Esophagus muscularis mucosa (tissue), 4 donors: ENCODE measurements at regions of chr12 and their contacts with region 1.

Region 1: DNA sequence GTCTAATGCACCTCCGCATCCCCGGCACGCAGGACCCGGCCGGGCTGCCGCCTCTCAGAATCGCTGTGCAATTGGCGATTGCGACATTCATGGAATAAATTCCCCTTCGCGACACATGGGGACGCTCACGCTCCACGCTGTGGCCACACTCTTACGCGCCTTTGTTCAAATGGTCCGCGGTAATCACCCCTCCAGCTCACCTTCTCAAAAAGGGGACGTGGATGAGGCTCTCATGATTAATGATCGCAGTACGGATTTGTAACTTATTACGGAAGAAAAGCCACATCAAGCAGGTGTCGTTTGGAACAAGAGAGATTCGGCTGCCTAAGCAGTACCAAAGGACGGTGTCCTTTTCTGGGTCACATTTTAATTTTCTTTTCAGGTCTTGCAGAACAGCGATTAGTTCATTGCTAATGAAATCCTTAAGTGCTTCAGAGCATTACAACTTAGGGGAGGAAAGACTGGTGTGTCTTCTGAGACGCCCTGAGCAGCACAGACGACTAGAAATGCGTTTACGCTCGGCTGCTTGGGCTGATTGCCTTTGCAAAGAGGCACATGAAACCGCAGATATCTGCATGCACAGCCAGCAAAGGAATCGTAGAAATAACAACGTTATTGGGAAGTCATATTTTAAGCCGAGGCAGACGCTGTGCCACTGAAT is 37.3 kb upstream of the ADGRD1 start:
- DNase-seq: peak; percentile 92
- H3K4me3 ChIP-seq: peak overlapping the region; percentile 33 to 46 (median 37)
- H3K27ac ChIP-seq: no peak overlapping the region
- H3K4me1 ChIP-seq: peaks cover 0 to 19% (median 11%) of the 10 kb centered on the region in 4 donors
- H3K27me3 ChIP-seq: peaks cover 0 to 16% (median 0%) of the 10 kb centered on the region in 4 donors
- CTCF ChIP-seq: peak; percentile 90 to 94 (median 91)
- EP300 ChIP-seq: no peak
- POLR2A ChIP-seq: no peak

Region 2: GRCh38 chr12:130796985-130797686 is 119.2 kb before region 1 on chr12:
- intact Hi-C with region 1: no loop called
- DNase-seq: no peak
- H3K4me3 ChIP-seq: no peak overlapping the region
- H3K27ac ChIP-seq: no peak overlapping the region
- H3K4me1 ChIP-seq: no peaks in the 10 kb centered on the region
- H3K27me3 ChIP-seq: no peaks in the 10 kb centered on the region
- CTCF ChIP-seq: no peak
- EP300 ChIP-seq: no peak
- POLR2A ChIP-seq: no peak

Region 3: DNA sequence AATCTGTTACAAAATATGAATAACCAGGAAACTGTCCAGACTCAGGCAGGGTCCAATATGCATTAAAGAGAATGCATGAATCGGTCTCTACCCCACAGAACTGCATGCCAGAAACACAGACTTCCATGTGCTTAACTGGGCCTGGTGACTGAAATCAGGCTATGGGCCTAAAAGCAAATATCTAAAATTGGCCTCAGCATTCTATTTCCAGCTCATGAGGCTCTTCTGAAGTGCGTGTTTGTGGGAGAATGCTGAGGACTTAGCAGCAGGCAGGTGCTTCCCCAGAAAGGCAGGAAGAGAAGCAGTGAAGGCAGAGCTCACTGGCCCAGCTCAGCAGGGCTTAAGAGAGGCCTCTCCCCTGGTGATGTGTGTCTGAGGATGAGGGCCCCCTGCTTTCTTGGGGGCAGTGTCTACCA is 85.8 kb after region 1 on chr12:
- intact Hi-C with region 1: loop called (anchors 10 kb)
- DNase-seq: no peak
- H3K4me3 ChIP-seq: no peak overlapping the region
- H3K27ac ChIP-seq: peak overlapping the region in 2 of 4 donors; percentile 55 to 56
- H3K4me1 ChIP-seq: peaks cover 9 to 32% (median 21%) of the 10 kb centered on the region in 4 donors
- H3K27me3 ChIP-seq: no peaks in the 10 kb centered on the region
- CTCF ChIP-seq: no peak
- EP300 ChIP-seq: no peak
- POLR2A ChIP-seq: no peak

Region 4: DNA sequence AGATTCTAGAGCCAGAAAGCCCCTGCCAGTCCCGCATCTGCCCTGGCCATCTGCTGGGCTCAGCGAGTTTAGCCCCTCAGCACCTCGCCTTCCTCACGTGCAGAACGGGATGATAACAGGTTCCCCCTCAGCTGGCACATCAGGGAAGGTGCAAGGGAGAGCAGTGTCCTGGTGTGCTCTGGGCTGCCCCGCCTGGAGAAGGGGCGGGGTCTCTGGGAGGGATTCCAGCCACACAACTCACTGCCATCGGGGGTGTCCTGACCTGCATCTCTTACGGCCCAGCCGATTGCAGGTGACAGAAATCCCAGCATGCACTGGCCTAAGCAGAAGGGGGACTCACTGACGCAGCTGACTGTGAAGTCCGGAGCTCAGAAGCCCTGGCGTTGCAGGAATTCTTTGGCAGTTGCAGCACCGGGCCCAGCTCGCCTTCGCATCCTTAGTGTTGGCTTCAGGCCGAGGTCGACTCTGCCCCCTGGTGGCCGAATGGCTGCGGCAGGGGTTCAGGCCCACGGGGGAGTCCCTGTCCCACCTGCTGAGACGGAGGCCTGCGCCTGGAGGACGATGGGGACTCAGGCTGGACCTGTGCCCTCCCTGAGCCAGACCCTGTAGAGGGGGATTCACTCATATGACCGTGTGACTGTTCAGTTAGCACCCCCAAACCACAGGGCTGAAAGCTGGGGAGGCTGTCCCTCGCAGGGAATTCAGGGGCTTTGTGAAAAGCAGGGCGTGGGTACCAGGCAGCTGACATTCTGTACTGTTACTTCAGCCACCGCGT is 215.9 kb after region 1 on chr12:
- intact Hi-C with region 1: loop called (anchors 2 kb)
- DNase-seq: no peak
- H3K4me3 ChIP-seq: no peak overlapping the region
- H3K27ac ChIP-seq: peak overlapping the region; percentile 19 to 59 (median 47)
- H3K4me1 ChIP-seq: peaks cover 7 to 25% (median 19%) of the 10 kb centered on the region in 4 donors
- H3K27me3 ChIP-seq: no peaks in the 10 kb centered on the region
- CTCF ChIP-seq: peak; percentile 68 to 82 (median 79)
- EP300 ChIP-seq: no peak
- POLR2A ChIP-seq: no peak

Region 5: GRCh38 chr12:131250028-131250950 is 333.9 kb after region 1 on chr12:
- intact Hi-C with region 1: no loop called
- DNase-seq: no peak
- H3K4me3 ChIP-seq: no peak overlapping the region
- H3K27ac ChIP-seq: no peak overlapping the region
- H3K4me1 ChIP-seq: peaks cover 0 to 7% (median 0%) of the 10 kb centered on the region in 4 donors
- H3K27me3 ChIP-seq: peaks cover 0 to 20% (median 0%) of the 10 kb centered on the region in 4 donors
- CTCF ChIP-seq: no peak
- EP300 ChIP-seq: no peak
- POLR2A ChIP-seq: no peak